ENCODE measurements at regions of chr17 and their contacts with region 1.

Region 1: GRCh38 chr17:49659661-49660382 is 18.1 kb downstream of the SPOP start:
- DNase-seq: no peak
- ATAC-seq: no peak
- H3K4me3 ChIP-seq: no peak overlapping the region
- H3K27ac ChIP-seq: no peak overlapping the region
- H3K4me1 ChIP-seq: peaks cover 0 to 49% (median 22%) of the 10 kb centered on the region in 12 donors
- H3K27me3 ChIP-seq: no peaks in the 10 kb centered on the region
- CTCF ChIP-seq: no peak
- POLR2A ChIP-seq: no peak

Region 2: GRCh38 chr17:49624896-49625295 is 34.9 kb before region 1 on chr17:
- intact Hi-C with region 1: loop called in 1 of 10 experiments (anchors 5 kb)
- DNase-seq: no peak
- ATAC-seq: peak in 2 of 4 donors; percentile 31 to 46
- H3K4me3 ChIP-seq: no peak overlapping the region
- H3K27ac ChIP-seq: peak overlapping the region in 1 of 12 donors; percentile 73
- H3K4me1 ChIP-seq: peaks cover 4 to 76% (median 38%) of the 10 kb centered on the region in 12 donors
- H3K27me3 ChIP-seq: no peaks in the 10 kb centered on the region
- CTCF ChIP-seq: no peak
- POLR2A ChIP-seq: no peak

Region 3: GRCh38 chr17:49822829-49823228 is 163.0 kb after region 1 on chr17:
- intact Hi-C with region 1: no loop called
- DNase-seq: peak in 4 of 5 donors; percentile 34 to 68 (median 56)
- ATAC-seq: peak; percentile 47 to 88 (median 78)
- H3K4me3 ChIP-seq: no peak overlapping the region
- H3K27ac ChIP-seq: peak overlapping the region in 1 of 12 donors; percentile 3
- H3K4me1 ChIP-seq: peaks cover 0 to 43% (median 6%) of the 10 kb centered on the region in 12 donors
- H3K27me3 ChIP-seq: no peaks in the 10 kb centered on the region
- CTCF ChIP-seq: no peak
- POLR2A ChIP-seq: no peak

Measured in heart left ventricle (tissue), 16 donors.